ENCODE measurements at regions of chr3 and their contacts with region 1.

Region 1: DNA sequence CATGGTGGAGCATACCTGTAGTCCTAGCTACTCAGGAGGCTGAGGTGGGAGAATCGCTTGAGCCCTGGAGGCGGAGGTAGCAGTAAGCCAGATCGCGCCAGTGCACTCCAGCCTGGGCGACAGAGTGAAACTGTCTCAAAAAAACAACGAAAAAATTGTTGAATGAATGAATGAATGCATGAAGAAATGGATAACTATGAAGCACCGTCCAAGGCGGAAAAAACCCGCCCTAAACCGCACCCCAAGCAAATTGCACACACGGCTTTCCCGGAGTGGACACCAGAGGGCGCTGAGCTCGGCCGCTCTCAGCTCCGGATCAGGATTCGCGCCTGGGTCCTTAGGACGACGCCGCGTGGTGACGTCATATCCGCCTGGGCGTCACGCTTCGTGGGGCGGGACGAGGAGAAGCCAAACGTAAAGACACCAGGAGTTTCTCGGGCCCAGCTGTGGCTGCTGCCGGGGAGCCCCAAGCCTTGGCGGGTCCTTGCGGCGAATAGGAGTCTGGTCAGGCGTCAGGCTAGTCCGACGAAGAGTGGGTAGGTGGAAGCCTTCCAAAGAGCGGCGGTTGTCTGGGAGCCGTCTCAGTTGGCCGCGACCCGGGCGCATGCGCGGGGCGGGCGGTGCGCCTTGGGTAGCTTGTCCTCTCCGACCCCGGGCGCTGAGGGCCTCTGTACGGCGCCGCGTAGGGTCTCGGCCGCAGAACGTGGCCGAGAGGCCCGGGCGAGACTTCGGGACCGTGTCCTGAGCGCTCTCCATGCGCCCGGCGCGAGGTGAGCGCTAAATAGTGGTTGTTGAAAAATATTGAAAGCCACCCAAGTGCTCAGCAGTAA is at the starts of genes HTD2 and RPP14:
- DNase-seq: peak; percentile 94 to 100 (median 98)
- ATAC-seq: peak; percentile 88 to 93 (median 89)
- H3K4me3 ChIP-seq: peak within 1 kb of the TSS; percentile 82 to 90
- H3K4me3 Mint-ChIP-seq: peak within 1 kb of the TSS; percentile 92 to 99 (median 97)
- H3K27ac ChIP-seq: peak within 1 kb of the TSS; percentile 95
- H3K27ac Mint-ChIP-seq: peak within 1 kb of the TSS; percentile 98 to 99
- H3K4me1 ChIP-seq: peaks cover 14 to 35% of the 10 kb centered on the region in 2 experiments
- H3K4me1 Mint-ChIP-seq: peaks cover 33 to 43% (median 38%) of the 10 kb centered on the region in 3 donors
- H3K27me3 ChIP-seq: peaks cover 0 to 3% of the 10 kb centered on the region in 2 experiments
- H3K27me3 Mint-ChIP-seq: peaks cover 13 to 15% of the 10 kb centered on the region in 2 donors
- total RNA-seq, gene HTD2: 7.3 to 10.0 (median 8.8) TPM
- total RNA-seq, gene RPP14: 13.1 to 15.7 (median 13.9) TPM

Region 2: GRCh38 chr3:58008140-58009025 is 297.7 kb before region 1 on chr3 and contains the start of gene FLNB:
- CTCF ChIA-PET with region 1: interaction called, 5 to 11 read pairs
- POLR2A ChIA-PET with region 1: no interaction called
- DNase-seq: peak; percentile 46 to 89 (median 72)
- ATAC-seq: peak; percentile 81 to 89 (median 84)
- H3K4me3 ChIP-seq: peak within 1 kb of the TSS; percentile 91 to 99
- H3K4me3 Mint-ChIP-seq: peak within 1 kb of the TSS; percentile 86 to 91 (median 90)
- H3K27ac ChIP-seq: peak within 1 kb of the TSS; percentile 52
- H3K27ac Mint-ChIP-seq: peak within 1 kb of the TSS; percentile 59 to 86
- H3K4me1 ChIP-seq: peaks cover 18 to 46% of the 10 kb centered on the region in 2 experiments
- H3K4me1 Mint-ChIP-seq: peaks cover 36 to 43% (median 40%) of the 10 kb centered on the region in 3 donors
- H3K27me3 ChIP-seq: peaks cover 0 to 3% of the 10 kb centered on the region in 2 experiments
- H3K27me3 Mint-ChIP-seq: no peaks in the 10 kb centered on the region
- total RNA-seq, gene FLNB: 37.0 to 79.7 (median 39.4) TPM

Region 3: GRCh38 chr3:58237238-58237940 is 68.7 kb before region 1 on chr3 and contains the start of gene ABHD6:
- CTCF ChIA-PET with region 1: interaction called, 5 to 25 read pairs
- POLR2A ChIA-PET with region 1: interaction called in 1 of 2 experiments, 5 read pairs
- DNase-seq: peak; percentile 37 to 87 (median 74)
- ATAC-seq: peak; percentile 85 to 91 (median 89)
- H3K4me3 ChIP-seq: peak within 1 kb of the TSS; percentile 85 to 92
- H3K4me3 Mint-ChIP-seq: peak within 1 kb of the TSS; percentile 89 to 91 (median 90)
- H3K27ac ChIP-seq: peak within 1 kb of the TSS; percentile 14
- H3K27ac Mint-ChIP-seq: peak within 1 kb of the TSS; percentile 81 to 85
- H3K4me1 ChIP-seq: peaks cover 4 to 21% of the 10 kb centered on the region in 2 experiments
- H3K4me1 Mint-ChIP-seq: peaks cover 10 to 17% (median 14%) of the 10 kb centered on the region in 3 donors
- H3K27me3 ChIP-seq: peaks cover 0 to 22% of the 10 kb centered on the region in 2 experiments
- H3K27me3 Mint-ChIP-seq: peaks cover 8 to 12% of the 10 kb centered on the region in 2 donors
- total RNA-seq, gene ABHD6: 3.9 to 7.0 (median 5.5) TPM

Region 4: DNA sequence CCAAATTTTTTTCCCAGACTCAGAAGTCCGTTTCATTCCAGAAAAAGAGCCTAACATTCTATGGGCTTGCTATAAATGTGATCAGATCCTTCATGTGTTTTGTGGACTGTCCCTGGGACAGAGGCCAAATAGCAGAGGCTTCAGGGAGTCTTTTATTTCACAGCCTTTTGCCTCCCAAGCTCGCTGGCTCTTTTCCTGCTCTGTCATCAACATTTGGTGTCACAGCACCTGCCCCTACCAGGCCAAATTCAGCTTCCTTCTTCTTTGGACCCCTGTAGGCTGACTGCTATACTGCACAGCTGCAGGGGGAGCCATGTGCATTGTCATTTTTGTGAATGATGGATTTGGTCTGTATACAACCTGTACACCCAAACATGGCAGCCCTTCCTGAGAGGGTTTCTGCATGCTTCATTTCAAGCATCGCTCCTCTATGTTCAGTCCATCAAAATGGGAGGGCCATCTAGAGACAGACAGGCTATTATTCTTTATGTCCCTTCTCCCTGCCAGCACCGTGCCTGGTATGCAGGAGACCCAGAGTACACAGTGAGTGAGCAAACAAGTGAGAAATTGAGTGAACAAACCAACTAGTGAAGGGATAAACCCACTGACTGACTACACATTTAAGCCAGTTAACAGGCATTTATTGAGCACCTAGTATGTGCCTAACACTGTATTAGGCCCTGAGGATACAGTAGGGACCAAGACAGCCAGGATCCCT is 17.9 kb before region 1 on chr3:
- CTCF ChIA-PET with region 1: no interaction called
- POLR2A ChIA-PET with region 1: no interaction called
- DNase-seq: no peak
- ATAC-seq: no peak
- H3K4me3 ChIP-seq: no peak overlapping the region
- H3K4me3 Mint-ChIP-seq: no peak overlapping the region
- H3K27ac ChIP-seq: no peak overlapping the region
- H3K27ac Mint-ChIP-seq: no peak overlapping the region
- H3K4me1 ChIP-seq: no peaks in the 10 kb centered on the region
- H3K4me1 Mint-ChIP-seq: no peaks in the 10 kb centered on the region
- H3K27me3 ChIP-seq: no peaks in the 10 kb centered on the region
- H3K27me3 Mint-ChIP-seq: no peaks in the 10 kb centered on the region

Region 5: DNA sequence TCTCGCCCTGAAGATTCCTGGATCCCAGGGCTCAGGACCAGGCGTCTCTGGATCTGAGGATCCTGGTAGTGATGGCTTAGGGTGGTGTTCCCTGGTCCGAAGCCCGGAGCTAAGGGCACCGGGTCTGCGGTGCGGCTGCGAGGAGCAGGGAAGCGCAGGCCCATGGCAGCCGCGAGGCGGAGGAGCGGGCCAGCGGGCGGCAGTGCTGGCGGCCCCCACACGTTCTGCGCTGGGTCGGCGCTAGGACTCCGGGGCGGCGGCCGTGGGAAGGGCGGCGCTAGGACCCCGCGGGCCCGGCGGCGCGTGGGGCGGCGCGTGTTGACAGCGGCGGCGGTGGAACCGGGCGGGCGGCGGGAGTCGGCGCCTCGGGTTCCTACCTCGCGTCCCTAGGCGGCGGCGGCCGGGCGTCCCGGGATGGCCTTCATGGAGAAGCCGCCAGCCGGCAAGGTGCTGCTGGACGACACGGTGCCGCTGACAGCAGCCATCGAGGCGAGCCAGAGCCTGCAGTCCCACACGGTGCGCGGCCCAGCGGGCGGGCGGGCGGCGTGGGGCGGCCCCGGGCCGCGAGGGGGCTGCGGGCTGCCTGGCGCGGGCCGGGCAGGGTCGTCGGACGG is 26.6 kb after region 1 on chr3 and contains the start of gene PXK:
- CTCF ChIA-PET with region 1: interaction called in 1 of 2 experiments, 10 read pairs
- POLR2A ChIA-PET with region 1: interaction called, 4 to 5 read pairs
- DNase-seq: peak; percentile 58 to 86 (median 73)
- ATAC-seq: peak; percentile 91 to 95 (median 92)
- H3K4me3 ChIP-seq: peak within 1 kb of the TSS; percentile 57 to 70
- H3K4me3 Mint-ChIP-seq: peak within 1 kb of the TSS; percentile 94 to 100 (median 99)
- H3K27ac ChIP-seq: no peak within 1 kb of the TSS
- H3K27ac Mint-ChIP-seq: peak within 1 kb of the TSS; percentile 84 to 91
- H3K4me1 ChIP-seq: peaks cover 8 to 17% of the 10 kb centered on the region in 2 experiments
- H3K4me1 Mint-ChIP-seq: peaks cover 36 to 43% (median 39%) of the 10 kb centered on the region in 3 donors
- H3K27me3 ChIP-seq: peaks cover 0 to 5% of the 10 kb centered on the region in 2 experiments
- H3K27me3 Mint-ChIP-seq: no peaks in the 10 kb centered on the region
- total RNA-seq, gene PXK: 17.4 to 23.0 (median 21.8) TPM

Region 6: DNA sequence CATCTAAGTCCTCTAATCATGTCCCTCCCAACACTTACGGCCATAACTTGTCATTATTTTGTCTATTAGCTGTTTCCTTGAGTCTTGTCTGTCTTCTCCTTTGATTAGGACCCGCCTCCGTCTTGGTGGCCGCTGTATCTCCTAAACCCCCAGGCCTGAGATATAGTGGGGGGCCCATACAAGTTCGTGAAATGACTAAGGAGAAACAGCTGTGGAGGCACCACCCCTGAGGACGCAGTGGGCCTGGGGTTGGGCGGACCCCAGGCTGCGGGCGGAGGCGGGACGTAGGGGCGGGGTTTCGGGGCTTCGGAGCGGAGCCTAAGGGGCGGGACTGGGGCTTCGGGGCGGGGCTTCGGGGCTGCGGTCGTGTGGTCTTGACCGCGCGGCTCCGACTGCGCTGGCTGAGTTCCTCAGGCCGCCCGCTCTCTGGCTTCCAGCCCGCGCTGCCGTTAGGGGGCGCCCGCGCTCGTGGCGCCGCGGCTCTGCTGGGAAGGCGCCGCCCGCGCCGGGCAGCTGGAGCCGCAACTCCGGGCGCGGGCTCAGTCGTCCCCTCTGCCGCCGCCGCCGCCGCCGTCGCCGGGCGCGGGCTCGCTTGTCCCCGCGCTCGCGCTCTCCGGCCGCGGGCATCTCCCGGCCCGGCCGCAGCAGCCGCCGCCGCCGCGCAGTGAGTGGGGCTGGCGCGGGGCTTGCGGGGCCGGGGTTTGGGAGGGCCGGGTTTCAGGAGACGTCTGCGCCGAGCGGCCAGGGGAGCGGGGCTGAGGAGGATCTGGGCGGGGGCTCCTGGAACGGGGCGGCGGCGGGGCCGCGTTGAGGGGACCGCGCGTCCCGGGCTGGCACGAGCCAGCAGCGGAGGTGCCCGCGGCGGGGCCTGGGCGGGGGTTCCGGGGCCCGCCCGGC is 185.7 kb after region 1 on chr3 and contains the start of gene KCTD6:
- CTCF ChIA-PET with region 1: interaction called, 3 to 53 read pairs
- POLR2A ChIA-PET with region 1: no interaction called
- DNase-seq: peak; percentile 62 to 93 (median 79)
- ATAC-seq: peak; percentile 86 to 90 (median 90)
- H3K4me3 ChIP-seq: peak within 1 kb of the TSS; percentile 81 to 83
- H3K4me3 Mint-ChIP-seq: peak within 1 kb of the TSS; percentile 88 to 92 (median 91)
- H3K27ac ChIP-seq: peak within 1 kb of the TSS; percentile 59
- H3K27ac Mint-ChIP-seq: peak within 1 kb of the TSS; percentile 90 to 91
- H3K4me1 ChIP-seq: peaks cover 17 to 21% of the 10 kb centered on the region in 2 experiments
- H3K4me1 Mint-ChIP-seq: peaks cover 53 to 61% (median 61%) of the 10 kb centered on the region in 3 donors
- H3K27me3 ChIP-seq: peaks cover 0 to 3% of the 10 kb centered on the region in 2 experiments
- H3K27me3 Mint-ChIP-seq: no peaks in the 10 kb centered on the region
- total RNA-seq, gene KCTD6: 6.6 to 9.4 (median 7.8) TPM